Dendritic cell treated with granulocyte-macrophage colony-stimulating factor and Interleukin-4, amounts not matched to agents 40 ng/mL and 50 ng/mL, for 4 days (primary cell): ENCODE measurements at regions of chr9 and their contacts with region 1.

Region 1: GRCh38 chr9:93302551-93303257 is 118.8 kb downstream of the WNK2 start:
- H3K4me3 Mint-ChIP-seq: no peak overlapping the region
- H3K27ac Mint-ChIP-seq: peak overlapping the region; percentile 69
- H3K4me1 Mint-ChIP-seq: peaks cover 11% of the 10 kb centered on the region
- H3K27me3 Mint-ChIP-seq: peaks cover 16% of the 10 kb centered on the region

Region 2: DNA sequence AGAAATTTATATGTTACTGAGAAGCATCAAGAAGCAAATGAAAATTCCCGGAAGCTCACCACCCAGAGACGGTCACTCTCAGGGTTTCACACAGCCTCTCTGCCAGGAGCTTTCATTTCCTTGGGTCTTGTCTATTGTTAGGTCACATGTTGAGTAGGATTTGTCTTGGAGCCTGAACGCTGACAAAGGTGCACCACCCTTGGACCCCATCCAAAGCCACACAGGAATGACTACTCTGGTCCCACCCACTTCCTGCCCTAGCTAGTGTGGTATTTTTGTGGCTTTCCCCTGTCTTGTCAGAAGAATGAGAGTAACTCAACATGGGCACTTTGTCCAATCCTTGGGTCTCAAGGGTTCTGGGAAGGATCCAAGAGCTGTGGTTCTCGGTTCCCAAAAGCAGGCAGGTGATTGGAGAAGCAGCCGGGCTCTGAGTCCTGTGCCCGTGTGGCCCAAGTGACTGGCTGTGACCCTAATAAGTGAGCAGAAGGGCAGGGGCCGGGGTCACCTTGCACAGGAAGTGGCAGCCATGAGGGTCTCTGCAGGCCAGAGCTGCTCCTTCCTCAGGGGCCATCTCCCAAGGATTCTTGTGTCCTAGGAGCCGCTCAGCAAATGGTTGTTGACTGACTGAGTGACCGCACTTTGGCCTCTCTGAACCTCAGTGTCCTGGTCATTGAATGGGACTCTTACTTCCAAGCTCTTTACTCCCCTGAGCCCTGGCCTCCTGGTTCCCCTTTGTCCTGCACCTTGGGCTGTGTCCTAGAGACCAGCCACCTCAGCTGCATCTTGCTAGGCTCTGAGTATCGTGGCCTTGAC is 348.4 kb before region 1 on chr9:
- intact Hi-C with region 1: loop called (anchors 2 kb)
- H3K4me3 Mint-ChIP-seq: no peak overlapping the region
- H3K27ac Mint-ChIP-seq: peak overlapping the region; percentile 34
- H3K4me1 Mint-ChIP-seq: peaks cover 23% of the 10 kb centered on the region
- H3K27me3 Mint-ChIP-seq: peaks cover 25% of the 10 kb centered on the region

Region 3: DNA sequence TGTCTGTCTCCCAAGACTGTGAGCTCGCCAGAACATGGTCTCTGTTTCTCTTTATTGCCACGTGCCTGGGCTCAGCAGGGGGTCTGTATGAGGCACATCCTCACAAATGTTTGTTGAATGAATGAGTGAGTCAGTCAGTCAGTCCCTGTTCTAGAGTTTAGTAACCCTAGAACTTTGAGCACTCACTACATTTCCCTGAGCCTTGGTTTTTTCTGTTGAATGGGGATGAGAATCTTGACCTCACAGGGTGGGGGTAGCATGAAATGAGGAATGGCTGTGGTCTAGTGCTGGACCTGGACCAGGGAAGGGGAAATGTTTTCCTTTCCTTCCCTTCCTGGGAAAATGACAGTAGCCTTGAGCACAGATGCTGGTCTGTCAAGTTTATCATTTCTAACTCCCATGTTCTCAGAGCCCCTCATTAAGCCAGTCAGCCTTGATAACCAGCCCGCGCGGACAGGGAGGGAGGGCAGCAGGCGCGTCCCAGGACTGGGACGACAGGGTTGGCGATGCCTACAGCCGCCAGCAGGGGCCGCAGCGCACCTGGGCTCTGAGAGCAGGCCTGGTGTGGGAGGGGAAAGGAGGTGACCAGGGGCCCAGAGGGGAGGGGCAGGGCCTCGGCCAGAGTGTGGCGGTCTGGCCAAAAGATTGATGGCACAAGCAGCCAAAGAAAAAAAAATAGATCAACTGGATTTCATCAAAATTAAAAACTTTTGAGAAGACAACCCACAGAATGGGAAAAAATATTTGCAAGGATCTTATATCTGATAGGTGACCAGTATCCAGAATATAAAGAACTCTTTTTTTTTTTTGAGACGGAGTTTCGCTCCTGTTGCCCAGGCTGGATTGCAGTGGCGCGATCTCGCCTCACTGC is 142.9 kb before region 1 on chr9:
- intact Hi-C with region 1: loop called (anchors 1 kb)
- H3K4me3 Mint-ChIP-seq: no peak overlapping the region
- H3K27ac Mint-ChIP-seq: peak overlapping the region; percentile 30
- H3K4me1 Mint-ChIP-seq: peaks cover 18% of the 10 kb centered on the region
- H3K27me3 Mint-ChIP-seq: peaks cover 9% of the 10 kb centered on the region